Ascending aorta (tissue), 2 donors: ENCODE measurements at regions of chr16 and their contacts with region 1.

Region 1: GRCh38 chr16:3123986-3124886 is 10.6 kb upstream of the ZNF213 start:
- DNase-seq: peak; percentile 88 to 98
- H3K4me3 ChIP-seq: peak overlapping the region; percentile 66 to 92
- H3K27ac ChIP-seq: peak overlapping the region; percentile 75 to 85
- H3K4me1 ChIP-seq: peaks cover 13 to 18% of the 10 kb centered on the region in 2 donors
- H3K27me3 ChIP-seq: no peaks in the 10 kb centered on the region
- CTCF ChIP-seq: peak in 2 of 3 experiments; percentile 6 to 28

Region 2: DNA sequence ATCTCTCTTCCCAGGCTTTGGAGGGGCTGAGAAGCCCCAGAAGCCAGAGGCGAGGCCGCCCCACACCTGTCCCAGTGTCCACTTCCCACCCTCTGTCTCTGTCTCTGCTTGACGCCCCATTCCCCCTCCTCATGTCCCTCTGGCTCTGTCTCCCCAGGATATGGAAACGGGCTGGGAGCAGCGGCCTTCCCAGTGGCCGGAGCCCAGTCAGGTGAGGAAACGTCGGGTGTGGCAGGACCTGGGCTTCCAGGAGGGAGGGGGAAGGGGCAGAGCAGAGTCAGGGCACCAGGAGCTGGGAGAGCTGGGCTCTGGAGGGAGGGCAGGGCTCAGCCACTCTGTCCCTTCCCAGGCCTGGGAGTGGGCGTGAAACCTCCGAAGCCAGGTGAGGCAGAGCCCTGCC is 133.3 kb before region 1 on chr16:
- intact Hi-C with region 1: no loop called
- DNase-seq: no peak
- H3K4me3 ChIP-seq: no peak overlapping the region
- H3K27ac ChIP-seq: no peak overlapping the region
- H3K4me1 ChIP-seq: peaks cover 0 to 3% of the 10 kb centered on the region in 2 donors
- H3K27me3 ChIP-seq: no peaks in the 10 kb centered on the region
- CTCF ChIP-seq: no peak

Region 3: GRCh38 chr16:3106205-3106928 is 17.9 kb before region 1 on chr16:
- intact Hi-C with region 1: loop called (anchors 1 kb)
- DNase-seq: peak; percentile 63 to 96
- H3K4me3 ChIP-seq: peak overlapping the region; percentile 58 to 73
- H3K27ac ChIP-seq: peak overlapping the region; percentile 46 to 48
- H3K4me1 ChIP-seq: peaks cover 4 to 5% of the 10 kb centered on the region in 2 donors
- H3K27me3 ChIP-seq: no peaks in the 10 kb centered on the region
- CTCF ChIP-seq: no peak

Region 4: GRCh38 chr16:3158471-3159314 is 34.5 kb after region 1 on chr16:
- intact Hi-C with region 1: loop called (anchors 5 kb)
- DNase-seq: peak; percentile 70 to 92
- H3K4me3 ChIP-seq: peak overlapping the region; percentile 59 to 92
- H3K27ac ChIP-seq: peak overlapping the region; percentile 89 to 94
- H3K4me1 ChIP-seq: peaks cover 4 to 8% of the 10 kb centered on the region in 2 donors
- H3K27me3 ChIP-seq: no peaks in the 10 kb centered on the region
- CTCF ChIP-seq: peak in 1 of 3 experiments; percentile 9

Region 5: DNA sequence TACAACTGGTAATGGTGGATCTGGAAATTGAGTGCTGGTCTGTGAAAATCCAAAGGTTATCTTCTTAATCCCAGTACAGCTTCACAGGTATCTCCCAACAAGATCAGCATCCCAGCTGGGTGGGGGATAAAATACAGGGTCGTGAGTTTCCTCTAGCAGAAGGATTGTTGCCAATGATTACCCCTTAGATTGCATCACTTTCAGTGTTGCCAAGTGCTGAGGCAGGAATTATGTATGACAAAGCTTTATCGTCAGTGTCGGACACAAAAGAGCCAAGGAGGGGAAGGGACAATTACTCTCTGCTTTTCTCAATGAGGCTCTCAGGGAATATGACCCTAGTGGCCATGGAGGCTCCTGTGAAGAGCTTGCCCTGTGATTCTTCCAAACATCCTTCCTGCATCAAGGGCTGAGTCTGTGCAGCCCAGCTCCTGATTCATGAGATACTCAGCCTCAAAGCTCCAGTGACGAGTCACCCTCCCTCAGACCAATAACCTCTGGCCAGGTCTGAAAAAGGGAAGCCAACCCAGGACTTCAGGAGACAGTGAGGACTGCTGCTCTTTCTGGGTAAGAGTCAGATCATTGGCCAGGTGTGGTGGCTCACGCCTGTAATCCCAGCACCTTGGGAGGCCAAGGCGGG is 78.8 kb after region 1 on chr16:
- intact Hi-C with region 1: no loop called
- DNase-seq: no peak
- H3K4me3 ChIP-seq: no peak overlapping the region
- H3K27ac ChIP-seq: no peak overlapping the region
- H3K4me1 ChIP-seq: no peaks in the 10 kb centered on the region
- H3K27me3 ChIP-seq: no peaks in the 10 kb centered on the region
- CTCF ChIP-seq: no peak